Endothelial cell of umbilical vein (primary cell): ENCODE measurements at regions of chr4 and their contacts with region 1.

Region 1: DNA sequence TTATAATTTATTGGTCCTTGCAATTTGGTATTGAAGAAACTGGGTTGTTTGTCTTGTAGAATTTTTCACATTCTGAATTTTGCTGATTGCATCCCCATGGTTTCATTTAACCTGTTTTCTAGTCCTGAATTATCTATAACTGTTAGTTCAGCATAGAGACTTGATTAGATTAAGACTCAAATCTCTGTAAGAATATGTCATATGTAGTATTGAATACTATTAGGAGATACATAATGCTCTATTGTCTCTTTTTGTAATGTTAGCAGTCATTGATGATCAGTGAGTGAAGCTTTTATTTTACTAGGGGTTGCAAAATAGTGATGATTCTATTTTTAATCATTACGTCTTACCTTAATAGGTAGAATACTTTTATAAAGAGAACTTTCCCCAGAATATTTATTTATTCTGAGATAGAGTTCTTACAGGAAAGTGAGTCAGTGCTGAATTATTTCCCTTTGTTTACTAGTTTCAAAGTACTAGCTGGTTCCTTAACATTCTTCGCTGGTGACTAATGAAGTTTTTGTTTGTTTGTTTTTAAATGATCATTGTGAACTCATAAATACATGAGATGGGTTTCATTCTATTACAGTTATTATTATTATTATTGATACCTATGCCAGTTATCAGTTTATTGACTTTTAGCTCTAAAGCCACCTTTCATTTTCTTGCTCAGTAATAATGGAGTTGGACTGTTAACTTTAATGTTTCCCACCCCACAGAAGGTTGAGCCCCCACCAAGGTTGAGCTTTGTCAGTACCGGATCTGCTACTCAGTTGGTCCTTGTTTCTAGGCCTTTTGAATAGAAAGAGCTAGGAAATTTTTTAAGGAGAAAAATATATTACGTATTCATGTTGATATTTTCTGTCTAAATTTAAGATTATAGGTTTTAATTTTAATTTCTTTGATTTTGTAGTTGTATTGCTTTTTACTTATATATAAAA is 102.3 kb downstream of the LARP1B start:
- DNase-seq: peak; percentile 87
- H3K4me3 ChIP-seq: peak overlapping the region in 1 of 3 experiments; percentile 48
- H3K27ac ChIP-seq: peak overlapping the region; percentile 99
- H3K4me1 ChIP-seq: peaks cover 60% of the 10 kb centered on the region
- H3K27me3 ChIP-seq: no peaks in the 10 kb centered on the region
- CTCF ChIP-seq: no peak
- POLR2A ChIP-seq: no peak

Region 2: DNA sequence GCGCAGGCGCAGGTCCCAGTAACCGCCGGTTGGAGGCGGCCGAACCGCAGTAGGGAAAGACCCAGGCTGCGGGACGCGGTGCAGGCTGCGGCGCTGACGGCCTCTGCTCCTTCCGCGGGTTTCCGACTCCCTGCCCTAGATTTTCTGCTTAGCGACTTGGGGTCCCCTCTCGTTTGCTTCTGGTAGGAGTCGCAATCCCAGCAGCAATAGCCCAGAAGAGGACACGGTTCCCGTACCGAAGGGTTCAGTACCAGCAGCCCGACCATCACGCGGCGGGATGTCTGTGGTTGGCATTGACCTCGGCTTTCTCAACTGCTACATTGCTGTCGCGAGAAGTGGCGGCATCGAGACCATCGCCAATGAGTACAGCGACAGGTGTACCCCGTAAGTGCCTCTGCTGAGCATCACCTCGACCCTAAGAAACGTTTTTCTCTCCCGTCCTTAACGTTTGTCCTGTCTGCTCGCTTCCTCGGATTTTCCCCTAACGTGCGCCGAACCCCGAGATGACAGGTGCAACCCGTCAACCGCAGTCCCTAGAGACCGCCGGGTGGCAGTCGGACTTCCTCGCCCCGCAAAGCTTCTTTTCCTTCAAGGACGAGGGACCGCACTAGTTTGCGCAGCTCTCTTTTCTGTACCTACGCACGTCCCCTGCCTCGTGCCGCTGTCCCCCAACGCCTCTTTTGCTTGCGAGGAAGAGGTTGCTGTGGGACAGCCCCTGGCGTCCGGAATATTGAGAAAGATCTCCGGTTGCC is 381.0 kb before region 1 on chr4 and contains the start of gene HSPA4L:
- CTCF ChIA-PET with region 1: no interaction called
- POLR2A ChIA-PET with region 1: no interaction called
- dilution Hi-C with region 1: no loop called
- intact Hi-C with region 1: loop called (anchors 2 kb)
- DNase-seq: peak; percentile 89
- H3K4me3 ChIP-seq: peak within 1 kb of the TSS; percentile 35 to 53 (median 53)
- H3K27ac ChIP-seq: peak within 1 kb of the TSS; percentile 50
- H3K4me1 ChIP-seq: peaks cover 2% of the 10 kb centered on the region
- H3K27me3 ChIP-seq: peaks cover 0 to 2% of the 10 kb centered on the region in 2 experiments
- CTCF ChIP-seq: peak in 1 of 2 donors; percentile 41
- POLR2A ChIP-seq: peak; percentile 68
- total RNA-seq, gene HSPA4L: 10.8 and 12.4 TPM in 2 replicates

Region 3: DNA sequence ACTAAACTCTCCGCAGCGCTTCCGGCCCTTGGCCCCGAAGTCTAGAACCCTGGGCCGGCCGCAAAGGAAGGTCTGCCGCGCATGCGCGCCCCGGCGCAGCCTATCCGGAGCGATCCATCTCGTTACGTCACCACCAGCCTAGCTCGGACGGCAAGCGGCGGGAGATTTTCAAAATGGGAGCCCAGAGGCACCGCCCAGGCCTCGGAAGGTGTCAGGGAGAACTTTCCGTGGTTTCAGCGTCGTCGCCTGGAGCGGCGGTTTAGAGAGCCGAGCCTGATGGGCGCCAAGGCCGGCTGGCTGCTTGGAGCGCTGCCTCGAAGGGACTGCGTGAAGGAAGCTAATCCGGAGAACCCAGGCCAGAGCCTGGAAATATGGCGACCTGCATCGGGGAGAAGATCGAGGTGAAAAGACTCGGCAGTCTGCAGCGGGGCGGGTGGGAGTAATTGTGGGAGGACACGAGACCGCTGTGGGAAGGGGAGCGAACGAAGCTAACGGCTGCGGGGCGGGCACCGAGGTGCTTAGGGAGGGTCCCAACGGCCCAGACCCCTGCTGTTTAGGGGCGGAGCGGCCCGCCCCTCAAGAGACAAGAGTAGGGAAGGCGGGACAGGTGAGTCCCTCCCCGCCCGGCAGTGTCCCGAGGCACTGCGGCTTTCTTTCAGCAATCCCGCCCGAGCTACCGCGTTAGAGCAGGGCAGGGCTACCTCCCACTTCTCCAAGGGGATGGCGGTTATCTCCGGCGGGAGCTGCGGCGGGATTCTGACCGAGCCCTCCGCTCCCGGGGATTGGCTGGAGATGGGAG is 282.5 kb before region 1 on chr4 and contains the start of gene PLK4:
- CTCF ChIA-PET with region 1: no interaction called
- POLR2A ChIA-PET with region 1: no interaction called
- dilution Hi-C with region 1: no loop called
- intact Hi-C with region 1: loop called (anchors 5 kb)
- DNase-seq: peak; percentile 97
- H3K4me3 ChIP-seq: peak within 1 kb of the TSS; percentile 92 to 97 (median 97)
- H3K27ac ChIP-seq: peak within 1 kb of the TSS; percentile 84
- H3K4me1 ChIP-seq: peaks cover 8% of the 10 kb centered on the region
- H3K27me3 ChIP-seq: no peaks in the 10 kb centered on the region
- CTCF ChIP-seq: no peak
- POLR2A ChIP-seq: peak; percentile 28
- total RNA-seq, gene PLK4: 34.8 and 37.7 TPM in 2 replicates

Region 4: GRCh38 chr4:127965062-127965802 is 198.2 kb before region 1 on chr4 and contains the starts of genes ABHD18 and MFSD8:
- CTCF ChIA-PET with region 1: no interaction called
- POLR2A ChIA-PET with region 1: no interaction called
- dilution Hi-C with region 1: no loop called
- intact Hi-C with region 1: loop called (anchors 1 kb)
- DNase-seq: peak; percentile 99
- H3K4me3 ChIP-seq: peak within 1 kb of the TSS; percentile 70 to 85 (median 71)
- H3K27ac ChIP-seq: peak within 1 kb of the TSS; percentile 62
- H3K4me1 ChIP-seq: peaks cover 8% of the 10 kb centered on the region
- H3K27me3 ChIP-seq: no peaks in the 10 kb centered on the region
- CTCF ChIP-seq: peak; percentile 32 to 61
- POLR2A ChIP-seq: peak; percentile 76
- total RNA-seq, gene ABHD18: 9.1 and 10.1 TPM in 2 replicates
- total RNA-seq, gene MFSD8: 19.4 and 21.3 TPM in 2 replicates

Region 5: DNA sequence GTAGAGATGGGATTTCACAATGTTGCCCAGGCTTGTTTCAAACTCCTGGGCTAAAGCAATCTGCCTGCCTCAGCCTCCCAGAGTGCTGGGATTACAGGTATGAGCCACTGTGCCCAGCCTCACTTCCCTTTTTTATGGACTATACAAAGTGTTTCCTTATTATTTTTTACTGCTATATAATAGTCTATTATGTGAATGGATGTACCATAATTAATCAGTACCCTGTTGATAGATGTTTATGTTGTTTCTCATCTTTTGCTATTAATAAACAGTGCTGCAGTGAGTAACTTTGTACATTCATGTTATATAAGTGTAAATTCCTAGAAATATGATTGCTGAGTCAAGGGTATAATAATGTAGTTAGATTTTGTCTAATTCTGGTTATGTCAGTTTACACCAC is 138.1 kb before region 1 on chr4:
- CTCF ChIA-PET with region 1: no interaction called
- POLR2A ChIA-PET with region 1: no interaction called
- dilution Hi-C with region 1: no loop called
- intact Hi-C with region 1: no loop called
- DNase-seq: no peak
- H3K4me3 ChIP-seq: no peak overlapping the region
- H3K27ac ChIP-seq: no peak overlapping the region
- H3K4me1 ChIP-seq: no peaks in the 10 kb centered on the region
- H3K27me3 ChIP-seq: no peaks in the 10 kb centered on the region
- CTCF ChIP-seq: no peak
- POLR2A ChIP-seq: no peak

Region 6: DNA sequence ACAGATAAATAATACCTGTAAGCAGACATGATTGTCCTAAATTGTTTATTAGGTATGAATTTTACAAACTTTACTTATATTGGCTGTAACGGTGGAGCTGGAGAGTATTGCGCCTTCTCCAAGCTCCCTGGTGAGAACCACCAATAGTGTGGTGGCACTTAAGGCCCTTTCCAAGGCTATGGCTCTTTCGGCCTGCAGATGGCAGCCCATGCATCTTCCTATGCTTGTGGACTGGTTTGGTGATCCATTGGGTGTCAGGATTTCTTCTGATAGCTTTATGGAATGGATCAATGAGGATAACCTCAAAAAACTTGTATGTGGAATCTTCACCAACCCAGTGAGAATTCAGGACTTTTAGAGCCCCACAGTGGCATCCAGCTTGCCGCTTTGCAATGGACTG is 94.5 kb before region 1 on chr4:
- CTCF ChIA-PET with region 1: interaction called, 9 read pairs
- POLR2A ChIA-PET with region 1: no interaction called
- dilution Hi-C with region 1: no loop called
- intact Hi-C with region 1: loop called (anchors 2 kb)
- DNase-seq: peak; percentile 40
- H3K4me3 ChIP-seq: no peak overlapping the region
- H3K27ac ChIP-seq: no peak overlapping the region
- H3K4me1 ChIP-seq: no peaks in the 10 kb centered on the region
- H3K27me3 ChIP-seq: no peaks in the 10 kb centered on the region
- CTCF ChIP-seq: peak; percentile 45 to 59
- POLR2A ChIP-seq: no peak

Region 7: GRCh38 chr4:128502818-128503527 is 339.5 kb after region 1 on chr4:
- CTCF ChIA-PET with region 1: no interaction called
- POLR2A ChIA-PET with region 1: no interaction called
- dilution Hi-C with region 1: no loop called
- intact Hi-C with region 1: loop called (anchors 5 kb)
- DNase-seq: peak; percentile 91
- H3K4me3 ChIP-seq: no peak overlapping the region
- H3K27ac ChIP-seq: peak overlapping the region; percentile 62
- H3K4me1 ChIP-seq: peaks cover 22% of the 10 kb centered on the region
- H3K27me3 ChIP-seq: no peaks in the 10 kb centered on the region
- CTCF ChIP-seq: no peak
- POLR2A ChIP-seq: peak; percentile 69